PC-3 (cell line): ENCODE measurements at regions of chr2 and their contacts with region 1.

Region 1: GRCh38 chr2:62321380-62322289 is 125.7 kb downstream of the B3GNT2 start:
- DNase-seq: no peak
- ATAC-seq: no peak
- H3K4me3 ChIP-seq: no peak overlapping the region
- H3K27ac ChIP-seq: no peak overlapping the region
- H3K4me1 ChIP-seq: no peaks in the 10 kb centered on the region
- H3K27me3 ChIP-seq: no peaks in the 10 kb centered on the region
- CTCF ChIP-seq: no peak

Region 2: GRCh38 chr2:62291052-62291451 is 30.6 kb before region 1 on chr2:
- CTCF ChIA-PET with region 1: no interaction called
- POLR2A ChIA-PET with region 1: interaction called, 11 read pairs
- intact Hi-C with region 1: no loop called
- DNase-seq: no peak
- ATAC-seq: no peak
- H3K4me3 ChIP-seq: no peak overlapping the region
- H3K27ac ChIP-seq: no peak overlapping the region
- H3K4me1 ChIP-seq: peaks cover 29% of the 10 kb centered on the region
- H3K27me3 ChIP-seq: no peaks in the 10 kb centered on the region
- CTCF ChIP-seq: no peak

Region 3: GRCh38 chr2:62467475-62468321 is 146.1 kb after region 1 on chr2:
- CTCF ChIA-PET with region 1: no interaction called
- POLR2A ChIA-PET with region 1: no interaction called
- intact Hi-C with region 1: no loop called
- DNase-seq: no peak
- ATAC-seq: no peak
- H3K4me3 ChIP-seq: no peak overlapping the region
- H3K27ac ChIP-seq: no peak overlapping the region
- H3K4me1 ChIP-seq: no peaks in the 10 kb centered on the region
- H3K27me3 ChIP-seq: no peaks in the 10 kb centered on the region
- CTCF ChIP-seq: no peak